ENCODE measurements at regions of chr15 and their contacts with region 1.

Region 1: GRCh38 chr15:43776718-43777583 is at the start of gene ELL3:
- DNase-seq: peak; percentile 71 to 90 (median 84)
- ATAC-seq: peak; percentile 79 to 86
- H3K4me3 Mint-ChIP-seq: peak within 1 kb of the TSS; percentile 92 to 97 (median 96)
- H3K27ac Mint-ChIP-seq: peak within 1 kb of the TSS; percentile 89 to 97 (median 93)
- H3K4me1 Mint-ChIP-seq: peaks cover 8 to 33% (median 28%) of the 10 kb centered on the region in 4 donors
- H3K27me3 Mint-ChIP-seq: no peaks in the 10 kb centered on the region
- polyA plus RNA-seq, gene ELL3: 0.73 to 2.1 (median 1.4) TPM

Region 2: GRCh38 chr15:43723151-43723550 is 53.8 kb before region 1 on chr15:
- POLR2A ChIA-PET with region 1: no interaction called
- DNase-seq: no peak
- ATAC-seq: no peak
- H3K4me3 Mint-ChIP-seq: no peak overlapping the region
- H3K27ac Mint-ChIP-seq: peak overlapping the region in 2 of 10 donors; percentile 13 to 45
- H3K4me1 Mint-ChIP-seq: no peaks in the 10 kb centered on the region
- H3K27me3 Mint-ChIP-seq: peaks cover 0 to 12% (median 2%) of the 10 kb centered on the region in 5 donors

Region 3: DNA sequence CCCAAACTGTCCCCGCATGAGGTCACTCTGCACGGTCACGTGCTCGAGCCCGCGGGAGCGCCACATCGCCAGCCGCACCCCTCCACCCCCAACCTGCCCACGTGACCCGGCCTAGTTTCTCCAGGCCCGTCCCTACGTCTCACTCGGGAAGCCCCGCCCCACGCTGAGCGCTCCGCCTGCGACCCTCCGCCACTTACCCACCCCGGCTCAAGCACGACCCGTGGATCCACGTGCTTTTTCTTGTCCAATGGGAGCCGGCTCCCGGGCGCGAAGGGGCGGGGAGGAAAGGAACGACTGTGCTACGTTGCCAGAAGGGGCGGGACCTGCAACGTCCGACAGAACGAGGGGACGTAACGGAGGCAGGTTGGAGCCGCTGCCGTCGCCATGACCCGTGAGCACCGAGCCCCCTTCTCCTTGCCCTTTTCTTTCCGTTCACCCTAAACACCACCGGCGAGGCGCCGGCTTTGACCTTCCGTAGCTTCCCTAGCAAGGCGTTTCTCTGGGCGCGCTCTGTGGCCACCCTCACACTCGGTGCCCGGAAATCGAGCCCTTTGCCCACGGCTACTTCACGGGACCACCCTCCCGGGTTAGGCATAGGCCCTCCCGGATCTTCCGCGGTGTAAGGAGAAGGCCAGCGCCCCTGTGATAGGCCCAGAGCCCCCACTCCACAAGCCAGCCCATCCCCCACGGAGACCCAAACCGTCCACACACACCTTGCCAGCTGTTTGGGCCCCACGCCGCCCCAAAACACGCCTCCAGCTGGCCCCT is 15.2 kb after region 1 on chr15 and contains the start of gene SERF2:
- POLR2A ChIA-PET with region 1: interaction called, 48 read pairs
- DNase-seq: peak; percentile 95 to 100 (median 98)
- ATAC-seq: peak; percentile 92 to 93
- H3K4me3 Mint-ChIP-seq: peak within 1 kb of the TSS; percentile 93 to 99 (median 96)
- H3K27ac Mint-ChIP-seq: peak within 1 kb of the TSS; percentile 94 to 99 (median 99)
- H3K4me1 Mint-ChIP-seq: peaks cover 25 to 56% (median 46%) of the 10 kb centered on the region in 4 donors
- H3K27me3 Mint-ChIP-seq: no peaks in the 10 kb centered on the region
- polyA plus RNA-seq, gene SERF2: 1,905 to 2,412 (median 2,207) TPM

Region 4: GRCh38 chr15:43800286-43801141 is 23.6 kb after region 1 on chr15 and contains the start of gene HYPK:
- POLR2A ChIA-PET with region 1: interaction called, 24 read pairs
- DNase-seq: peak; percentile 84 to 95 (median 88)
- ATAC-seq: peak; percentile 97 to 99
- H3K4me3 Mint-ChIP-seq: peak within 1 kb of the TSS; percentile 97 to 100 (median 100)
- H3K27ac Mint-ChIP-seq: peak within 1 kb of the TSS; percentile 98 to 100 (median 100)
- H3K4me1 Mint-ChIP-seq: peaks cover 18 to 55% (median 44%) of the 10 kb centered on the region in 4 donors
- H3K27me3 Mint-ChIP-seq: no peaks in the 10 kb centered on the region
- polyA plus RNA-seq, gene HYPK: 7.7 to 14.1 (median 13.0) TPM

Region 5: GRCh38 chr15:43824302-43825246 is 47.6 kb after region 1 on chr15 and contains the start of gene MFAP1:
- POLR2A ChIA-PET with region 1: interaction called, 13 read pairs
- DNase-seq: peak; percentile 76 to 96 (median 90)
- ATAC-seq: peak; percentile 91 to 93
- H3K4me3 Mint-ChIP-seq: peak within 1 kb of the TSS; percentile 95 to 99 (median 98)
- H3K27ac Mint-ChIP-seq: peak within 1 kb of the TSS; percentile 96 to 99 (median 98)
- H3K4me1 Mint-ChIP-seq: peaks cover 21 to 73% (median 62%) of the 10 kb centered on the region in 4 donors
- H3K27me3 Mint-ChIP-seq: no peaks in the 10 kb centered on the region
- polyA plus RNA-seq, gene MFAP1: 5.2 to 18.0 (median 10.4) TPM

Measured in naive thymus-derived CD8-positive, alpha-beta T cell (primary cell).